ENCODE measurements at regions of chr11 and their contacts with region 1.

Region 1: GRCh38 chr11:78416305-78417178 is 1.1 kb downstream of the GAB2 start:
- DNase-seq: peak; percentile 78
- H3K4me3 Mint-ChIP-seq: peak overlapping the region; percentile 97
- H3K27ac Mint-ChIP-seq: peak overlapping the region; percentile 92
- H3K4me1 Mint-ChIP-seq: peaks cover 64% of the 10 kb centered on the region
- H3K27me3 Mint-ChIP-seq: peaks cover 8% of the 10 kb centered on the region

Region 2: DNA sequence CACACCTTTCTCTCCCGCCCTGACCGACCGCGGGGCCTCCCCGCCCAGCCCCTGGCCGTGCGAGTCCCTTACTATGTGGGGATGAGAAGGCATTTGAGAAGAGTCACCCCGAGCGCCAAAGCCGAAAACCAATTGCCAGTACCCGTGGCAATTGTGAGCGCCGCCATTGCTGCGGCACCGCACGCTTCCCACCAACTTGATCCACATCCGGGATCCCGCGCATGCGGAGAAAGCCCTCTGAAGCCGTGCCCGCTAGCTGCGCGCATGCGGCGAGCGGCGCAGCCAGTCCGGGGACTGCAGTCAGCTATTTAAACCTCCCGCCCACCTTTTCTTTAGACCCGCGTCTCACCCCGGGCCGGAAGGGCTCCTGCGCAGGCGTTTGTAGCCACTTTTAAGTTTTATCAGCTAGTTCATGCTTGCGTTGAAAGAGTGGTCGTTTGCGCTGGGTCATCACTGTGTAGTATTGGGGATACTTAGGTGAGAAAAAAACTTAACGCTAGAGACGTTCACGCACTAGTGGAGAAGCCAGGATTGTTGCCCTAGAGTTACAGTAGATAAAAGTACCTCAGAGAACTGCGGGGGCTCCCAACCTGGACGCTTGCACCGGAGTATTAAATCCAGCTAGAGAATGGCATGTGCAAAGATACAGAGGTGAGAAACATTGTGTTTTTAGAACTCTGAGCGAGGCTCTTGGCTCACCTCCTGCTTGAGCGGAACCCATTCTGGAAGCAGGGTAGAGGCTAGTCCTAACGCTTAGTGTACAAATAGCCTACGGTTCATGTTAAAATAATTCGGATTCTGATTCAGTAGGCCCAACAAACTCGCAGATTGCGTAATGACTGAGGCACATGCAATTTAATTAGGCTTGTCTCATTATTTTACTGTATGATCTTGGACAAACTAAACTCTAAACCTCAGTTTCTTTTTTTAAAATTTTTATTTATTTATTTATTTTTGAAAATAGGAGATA is 276.8 kb before region 1 on chr11 and contains the start of gene ALG8:
- intact Hi-C with region 1: loop called (anchors 2 kb)
- DNase-seq: peak; percentile 96
- H3K4me3 Mint-ChIP-seq: peak within 1 kb of the TSS; percentile 95
- H3K27ac Mint-ChIP-seq: peak within 1 kb of the TSS; percentile 90
- H3K4me1 Mint-ChIP-seq: peaks cover 43% of the 10 kb centered on the region
- H3K27me3 Mint-ChIP-seq: no peaks in the 10 kb centered on the region
- total RNA-seq, gene ALG8: 57.9 and 74.2 TPM in 2 replicates

Region 3: GRCh38 chr11:78325274-78325781 is 91.2 kb before region 1 on chr11:
- intact Hi-C with region 1: loop called (anchors 5 kb)
- DNase-seq: peak; percentile 28
- H3K4me3 Mint-ChIP-seq: peak overlapping the region; percentile 56
- H3K27ac Mint-ChIP-seq: peak overlapping the region; percentile 86
- H3K4me1 Mint-ChIP-seq: peaks cover 78% of the 10 kb centered on the region
- H3K27me3 Mint-ChIP-seq: no peaks in the 10 kb centered on the region

Region 4: GRCh38 chr11:78432058-78432515 is 15.5 kb after region 1 on chr11:
- intact Hi-C with region 1: loop called (anchors 1 kb)
- DNase-seq: no peak
- H3K4me3 Mint-ChIP-seq: no peak overlapping the region
- H3K27ac Mint-ChIP-seq: no peak overlapping the region
- H3K4me1 Mint-ChIP-seq: peaks cover 34% of the 10 kb centered on the region
- H3K27me3 Mint-ChIP-seq: no peaks in the 10 kb centered on the region

Region 5: DNA sequence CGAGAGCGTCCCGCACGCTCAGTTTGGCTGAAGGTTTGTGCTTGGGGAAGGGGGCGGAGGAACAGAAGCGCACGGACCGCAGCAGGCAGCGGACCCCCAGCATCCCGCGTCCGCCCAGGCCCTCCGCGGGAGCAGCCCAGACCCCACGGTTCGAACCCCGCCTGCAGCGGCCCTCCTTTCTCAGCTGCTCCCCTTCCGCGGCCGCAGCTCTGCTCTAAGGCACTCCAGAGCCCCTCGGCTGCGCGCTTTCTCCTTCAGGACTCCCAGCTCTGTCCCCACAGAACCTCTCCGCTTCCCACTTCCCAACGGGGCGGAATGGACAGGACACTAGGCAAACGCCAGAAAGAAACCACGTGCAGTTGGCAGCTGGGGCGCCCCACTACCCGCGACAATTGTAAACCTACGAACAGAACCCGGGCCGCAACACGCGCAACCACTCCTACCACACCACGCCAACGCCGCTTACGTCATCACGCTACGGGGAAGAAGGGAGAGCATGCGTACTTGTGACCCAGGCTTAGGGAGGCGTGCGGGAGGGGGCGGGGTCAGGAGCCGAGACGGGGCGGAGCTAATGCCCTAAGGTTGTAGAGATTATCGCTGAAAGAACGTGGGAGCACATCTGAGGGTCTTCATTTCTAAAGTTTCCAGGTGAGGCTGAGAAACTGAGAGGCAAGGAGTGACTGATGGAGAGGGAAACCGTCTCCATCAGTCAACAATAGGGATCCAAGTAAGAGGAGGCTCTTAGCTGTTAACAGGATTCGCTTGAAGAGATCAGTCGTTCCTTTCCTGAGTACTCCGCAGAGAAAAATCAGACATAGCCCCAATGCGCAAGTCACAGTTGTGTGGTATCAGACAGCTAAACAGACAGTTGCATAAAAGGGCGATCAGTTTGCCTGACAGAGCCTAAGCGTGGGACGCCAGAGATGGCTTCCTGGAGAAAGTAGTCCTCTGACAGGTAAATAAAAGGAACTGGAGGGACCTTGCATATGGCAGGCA is 158.1 kb after region 1 on chr11 and contains the start of gene NARS2:
- intact Hi-C with region 1: loop called (anchors 1 kb)
- DNase-seq: peak; percentile 95
- H3K4me3 Mint-ChIP-seq: peak within 1 kb of the TSS; percentile 90
- H3K27ac Mint-ChIP-seq: peak within 1 kb of the TSS; percentile 86
- H3K4me1 Mint-ChIP-seq: peaks cover 40% of the 10 kb centered on the region
- H3K27me3 Mint-ChIP-seq: peaks cover 7% of the 10 kb centered on the region
- total RNA-seq, gene NARS2: 38.2 and 38.7 TPM in 2 replicates

Measured in activated T-helper 1 cell treated with anti-CD3 and anti-CD28 coated beads, Interleukin-12 subunit alpha, Interleukin-12 subunit beta, Interleukin-2, Interleukin-4 antibody, amounts not matched to agents 30 ng/mL and 10 ng/mL and 1 ng/mL, durations not matched to agents 14 hours and 24 hours and 36 hours (primary cell).